MCF 10A (cell line): ENCODE measurements at regions of chr10 and their contacts with region 1.

Region 1: DNA sequence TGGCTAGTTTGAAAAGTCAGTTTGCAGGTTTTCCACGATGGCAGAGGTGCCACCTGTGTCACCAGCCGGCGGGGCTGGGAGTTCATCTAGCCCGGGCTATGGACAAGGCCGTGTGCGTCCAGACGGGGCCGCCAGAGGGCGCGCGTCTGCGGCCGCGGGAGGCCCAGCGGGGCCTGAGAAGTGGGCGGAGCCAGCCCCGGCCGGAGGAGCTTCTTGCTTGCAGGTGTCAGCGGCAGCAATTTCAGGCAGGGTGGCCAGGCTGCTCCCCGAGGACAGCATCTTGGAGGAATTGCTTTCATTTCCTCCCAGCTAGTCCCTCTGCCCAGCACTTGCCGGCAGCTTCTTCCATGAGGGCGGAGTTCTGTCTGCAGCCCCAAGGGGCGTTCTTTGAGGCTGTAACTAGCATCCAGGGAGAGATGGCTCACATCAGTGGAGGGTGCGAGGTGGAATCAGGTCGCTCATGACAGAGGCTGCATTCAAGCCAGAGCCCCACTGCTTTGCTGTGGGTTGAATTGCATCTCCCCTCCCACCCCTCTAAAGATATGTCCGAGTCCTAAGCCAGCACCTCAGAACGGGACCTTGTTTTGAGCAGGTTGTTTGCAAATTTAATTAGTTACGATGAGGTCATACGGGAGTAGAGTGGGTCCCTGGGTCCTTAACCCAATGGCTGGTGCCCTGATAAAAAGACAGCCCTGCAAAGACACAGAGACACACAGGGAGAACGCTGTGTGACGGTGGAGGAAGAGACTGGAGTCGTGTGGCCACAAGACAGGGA is 85.9 kb upstream of the MKI67 start:
- DNase-seq: peak; percentile 82
- H3K4me3 Mint-ChIP-seq: peak overlapping the region; percentile 58
- H3K27ac Mint-ChIP-seq: no peak overlapping the region
- H3K4me1 Mint-ChIP-seq: no peaks in the 10 kb centered on the region
- H3K27me3 Mint-ChIP-seq: no peaks in the 10 kb centered on the region
- CTCF ChIP-seq: peak; percentile 91

Region 2: DNA sequence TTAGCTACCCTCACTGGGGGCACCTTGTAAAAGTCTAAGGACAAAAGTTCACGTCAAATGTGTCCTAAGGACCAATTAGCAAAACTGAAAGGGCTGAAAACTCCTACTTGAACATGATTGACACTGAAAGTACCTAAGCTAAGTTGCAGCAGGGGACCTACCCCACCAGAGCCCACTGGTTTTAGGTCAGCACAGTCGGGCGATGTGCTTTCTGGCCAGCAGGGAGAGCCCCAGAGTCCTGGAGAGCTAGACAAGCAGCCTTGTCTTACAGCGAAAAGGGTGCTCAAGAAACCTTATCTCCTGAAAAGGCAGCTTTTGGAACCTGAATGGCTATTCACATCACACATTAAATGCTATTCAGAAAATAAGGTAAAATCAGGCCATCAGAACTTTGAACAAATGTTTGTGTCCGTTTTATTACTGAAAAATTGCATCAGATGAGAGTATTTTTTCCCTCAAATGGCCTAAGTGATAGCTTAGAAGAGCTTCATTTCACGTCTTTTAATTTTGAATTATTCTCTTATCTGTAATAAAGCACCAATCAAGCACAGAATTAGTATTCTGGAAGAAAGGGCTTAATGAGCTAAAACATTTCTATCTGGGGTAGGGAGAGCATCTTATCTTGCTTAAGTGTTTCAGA is 33.7 kb before region 1 on chr10:
- CTCF ChIA-PET with region 1: interaction called, 13 read pairs
- POLR2A ChIA-PET with region 1: no interaction called
- intact Hi-C with region 1: no loop called
- DNase-seq: peak; percentile 55
- H3K4me3 Mint-ChIP-seq: no peak overlapping the region
- H3K27ac Mint-ChIP-seq: no peak overlapping the region
- H3K4me1 Mint-ChIP-seq: peaks cover 4% of the 10 kb centered on the region
- H3K27me3 Mint-ChIP-seq: peaks cover 36% of the 10 kb centered on the region
- CTCF ChIP-seq: peak; percentile 48

Region 3: DNA sequence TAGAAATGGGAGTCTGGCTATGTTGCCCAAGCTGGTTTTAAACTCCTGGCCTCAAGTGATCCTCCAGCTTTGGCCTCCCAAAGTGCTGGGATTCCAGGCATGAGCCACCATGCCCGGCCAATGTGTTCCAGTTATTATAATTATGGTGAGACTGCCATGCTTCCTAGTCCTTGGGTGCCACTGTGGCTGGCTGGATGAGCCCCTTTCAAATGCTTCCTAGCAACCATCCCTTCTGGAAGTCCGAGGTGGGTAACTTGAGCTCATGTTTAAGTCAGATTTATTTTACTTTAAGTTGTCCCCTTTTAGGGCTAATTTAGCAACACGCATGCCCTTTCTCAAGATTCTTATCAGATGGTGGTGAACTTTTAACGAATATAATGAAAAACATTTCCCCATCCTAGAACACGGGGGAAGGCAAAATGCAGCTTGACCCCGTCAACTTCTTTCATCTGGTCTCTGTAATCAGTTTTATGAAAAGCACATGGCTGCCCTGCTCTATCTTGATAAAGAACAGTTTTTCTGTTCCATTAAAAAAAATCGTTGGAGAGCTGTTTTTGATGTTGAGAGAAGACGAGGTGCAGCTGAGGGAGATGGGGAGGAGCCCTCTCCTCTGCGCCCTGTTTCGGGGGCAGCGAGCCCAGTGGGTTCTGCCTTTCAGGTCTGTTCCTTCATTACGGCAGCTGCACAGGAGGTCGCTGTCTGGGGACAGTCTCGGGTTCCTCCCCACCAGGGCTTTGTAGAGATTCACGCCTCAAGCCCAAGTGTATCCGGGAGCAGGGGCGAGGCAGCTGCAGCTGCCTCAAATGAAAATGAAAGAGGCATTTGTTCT is 25.0 kb before region 1 on chr10:
- CTCF ChIA-PET with region 1: interaction called, 13 read pairs
- POLR2A ChIA-PET with region 1: no interaction called
- intact Hi-C with region 1: no loop called
- DNase-seq: no peak
- H3K4me3 Mint-ChIP-seq: no peak overlapping the region
- H3K27ac Mint-ChIP-seq: no peak overlapping the region
- H3K4me1 Mint-ChIP-seq: no peaks in the 10 kb centered on the region
- H3K27me3 Mint-ChIP-seq: peaks cover 69% of the 10 kb centered on the region
- CTCF ChIP-seq: no peak

Region 4: DNA sequence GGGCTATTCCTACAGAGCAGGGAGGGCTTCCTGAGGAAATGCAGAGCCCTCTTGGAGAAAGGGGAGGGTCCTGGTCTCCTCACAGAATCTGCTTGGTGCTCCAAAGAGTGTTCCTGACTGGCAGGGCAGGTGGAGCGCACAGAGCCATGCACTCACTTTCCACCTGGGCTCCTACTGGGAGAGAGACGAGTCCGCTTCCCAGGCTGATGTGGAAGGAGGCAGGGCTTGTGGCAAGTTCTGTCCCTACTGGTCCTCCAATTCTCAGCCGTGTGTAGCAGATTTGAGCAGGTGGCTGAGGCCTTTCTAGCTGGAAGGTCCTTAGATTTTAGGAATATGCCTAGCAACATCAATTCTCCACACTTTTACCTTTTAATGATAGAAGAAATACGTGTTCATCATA is 25.6 kb after region 1 on chr10:
- CTCF ChIA-PET with region 1: interaction called, 11 read pairs
- POLR2A ChIA-PET with region 1: no interaction called
- intact Hi-C with region 1: no loop called
- DNase-seq: no peak
- H3K4me3 Mint-ChIP-seq: no peak overlapping the region
- H3K27ac Mint-ChIP-seq: no peak overlapping the region
- H3K4me1 Mint-ChIP-seq: no peaks in the 10 kb centered on the region
- H3K27me3 Mint-ChIP-seq: peaks cover 13% of the 10 kb centered on the region
- CTCF ChIP-seq: no peak